CD4-positive, alpha-beta T cell (primary cell): ENCODE measurements at regions of chr3 and their contacts with region 1.

Region 1: DNA sequence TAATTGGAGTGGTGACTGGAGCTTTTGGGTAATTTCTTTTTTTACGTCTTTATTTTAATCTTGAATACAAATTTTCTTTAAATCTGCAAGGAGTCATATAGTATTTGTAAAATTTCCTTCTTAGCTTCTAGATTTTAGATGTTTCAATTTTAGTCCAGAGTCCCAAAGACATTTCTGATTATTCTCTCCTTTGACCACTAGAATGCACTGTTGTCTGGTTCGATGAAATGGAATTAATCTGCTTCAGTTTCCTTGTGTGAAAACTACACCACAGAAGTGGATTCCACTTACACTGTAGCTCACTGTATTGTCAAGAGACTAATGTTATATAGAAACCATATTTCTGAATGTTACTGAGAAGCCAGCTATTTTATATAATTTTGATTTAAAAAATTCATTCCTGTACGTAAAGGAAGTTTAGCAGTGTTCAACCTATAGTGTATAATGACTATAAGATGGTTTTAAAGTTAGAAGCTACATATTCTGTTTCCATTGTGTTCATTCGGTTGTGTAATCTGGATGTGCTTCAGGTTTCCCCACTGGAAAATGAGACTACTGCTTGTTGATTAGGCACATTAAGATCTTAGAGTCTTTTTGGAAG is 6.1 kb downstream of the GRAMD1C start:
- DNase-seq: peak in 3 of 14 experiments; percentile 38 to 46 (median 44)
- ATAC-seq: no peak
- H3K4me3 ChIP-seq: no peak overlapping the region
- H3K4me3 Mint-ChIP-seq: no peak overlapping the region
- H3K27ac ChIP-seq: no peak overlapping the region
- H3K27ac Mint-ChIP-seq: no peak overlapping the region
- H3K4me1 ChIP-seq: no peaks in the 10 kb centered on the region
- H3K4me1 Mint-ChIP-seq: no peaks in the 10 kb centered on the region
- H3K27me3 ChIP-seq: no peaks in the 10 kb centered on the region
- H3K27me3 Mint-ChIP-seq: no peaks in the 10 kb centered on the region
- CTCF ChIP-seq: peak; percentile 70

Region 2: GRCh38 chr3:113795693-113796092 is 49.0 kb before region 1 on chr3:
- CTCF ChIA-PET with region 1: no interaction called
- POLR2A ChIA-PET with region 1: no interaction called
- intact Hi-C with region 1: no loop called
- DNase-seq: no peak
- ATAC-seq: no peak
- H3K4me3 ChIP-seq: no peak overlapping the region
- H3K4me3 Mint-ChIP-seq: no peak overlapping the region
- H3K27ac ChIP-seq: no peak overlapping the region
- H3K27ac Mint-ChIP-seq: no peak overlapping the region
- H3K4me1 ChIP-seq: no peaks in the 10 kb centered on the region
- H3K4me1 Mint-ChIP-seq: no peaks in the 10 kb centered on the region
- H3K27me3 ChIP-seq: no peaks in the 10 kb centered on the region
- H3K27me3 Mint-ChIP-seq: no peaks in the 10 kb centered on the region
- CTCF ChIP-seq: no peak

Region 3: GRCh38 chr3:113912552-113913236 is 68.0 kb after region 1 on chr3:
- CTCF ChIA-PET with region 1: interaction called, 6 read pairs
- POLR2A ChIA-PET with region 1: no interaction called
- intact Hi-C with region 1: loop called (anchors 1 to 2 kb)
- DNase-seq: peak in 7 of 14 experiments; percentile 12 to 71 (median 45)
- ATAC-seq: peak; percentile 96
- H3K4me3 ChIP-seq: peak overlapping the region; percentile 21
- H3K4me3 Mint-ChIP-seq: peak overlapping the region; percentile 18
- H3K27ac ChIP-seq: no peak overlapping the region
- H3K27ac Mint-ChIP-seq: peak overlapping the region; percentile 14
- H3K4me1 ChIP-seq: peaks cover 4% of the 10 kb centered on the region
- H3K4me1 Mint-ChIP-seq: peaks cover 5% of the 10 kb centered on the region
- H3K27me3 ChIP-seq: no peaks in the 10 kb centered on the region
- H3K27me3 Mint-ChIP-seq: no peaks in the 10 kb centered on the region
- CTCF ChIP-seq: peak; percentile 73